Left cardiac atrium (tissue), 4 donors: ENCODE measurements at regions of chr19 and their contacts with region 1.

Region 1: DNA sequence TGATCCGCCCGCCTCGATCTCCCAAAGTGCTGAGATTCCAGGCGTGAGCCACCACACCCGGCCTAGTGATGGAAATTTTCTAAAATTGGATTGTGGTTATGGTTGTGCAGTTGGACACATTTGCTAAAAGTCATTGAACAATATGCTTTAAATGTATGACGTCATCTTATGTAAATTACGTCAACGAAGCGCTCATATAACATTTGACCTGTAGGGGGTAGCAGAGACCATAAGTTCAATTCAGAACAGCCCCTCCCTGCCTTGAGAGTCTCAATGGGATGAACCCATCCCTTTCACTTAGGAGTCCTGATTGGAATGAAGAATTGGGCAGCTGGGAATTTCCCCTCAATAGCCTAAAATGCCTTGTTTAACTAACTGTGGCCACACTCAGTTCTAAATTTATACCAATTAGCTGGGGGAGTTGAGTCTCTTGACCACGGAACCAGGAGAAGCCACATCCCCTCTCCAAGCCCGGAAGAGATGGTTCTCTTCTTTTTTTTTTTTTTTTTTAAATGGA is 15.3 kb upstream of the TLE6 start:
- DNase-seq: no peak
- ATAC-seq: peak; percentile 75 to 94

Region 2: GRCh38 chr19:2811735-2812406 is 150.2 kb before region 1 on chr19:
- intact Hi-C with region 1: no loop called
- DNase-seq: no peak
- ATAC-seq: no peak

Region 3: GRCh38 chr19:3108775-3109174 is 146.7 kb after region 1 on chr19:
- intact Hi-C with region 1: loop called (anchors 5 to 10 kb)
- DNase-seq: peak; percentile 66
- ATAC-seq: peak; percentile 31 to 42

Region 4: GRCh38 chr19:3163230-3163886 is 201.3 kb after region 1 on chr19:
- intact Hi-C with region 1: loop called (anchors 2 to 5 kb)
- DNase-seq: peak; percentile 62
- ATAC-seq: peak; percentile 89 to 90

Region 5: GRCh38 chr19:3176603-3177501 is 214.7 kb after region 1 on chr19:
- intact Hi-C with region 1: no loop called
- DNase-seq: no peak
- ATAC-seq: peak in 1 of 2 donors; percentile 17